Left cardiac atrium (tissue), 4 donors: ENCODE measurements at regions of chr11 and their contacts with region 1.

Region 1: GRCh38 chr11:110362971-110363509 is 66.6 kb upstream of the RDX start:
- DNase-seq: no peak
- ATAC-seq: peak; percentile 38 to 44

Region 2: GRCh38 chr11:109956124-109956793 is 406.8 kb before region 1 on chr11:
- intact Hi-C with region 1: loop called in 1 of 2 experiments (anchors 10 kb)
- DNase-seq: no peak
- ATAC-seq: no peak

Region 3: DNA sequence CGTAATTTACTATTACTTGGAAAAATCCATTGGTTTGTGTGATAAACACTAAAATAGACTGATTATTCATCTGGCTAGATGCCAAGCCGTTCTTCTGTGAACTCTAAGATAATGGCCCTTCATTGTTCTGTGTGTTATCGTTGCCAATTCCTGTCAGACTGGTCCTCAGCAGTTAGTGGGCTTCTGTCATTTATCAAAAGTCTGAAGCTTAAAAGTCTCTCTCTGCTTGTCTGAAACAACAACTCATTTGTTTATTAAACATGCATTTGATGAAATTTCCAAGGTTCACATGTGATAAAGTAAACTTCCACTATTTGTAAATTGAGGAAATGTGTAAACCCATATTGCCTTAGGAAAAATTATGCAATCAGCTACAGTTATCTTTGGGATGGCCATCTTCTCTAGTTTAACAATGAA is 45.5 kb before region 1 on chr11:
- intact Hi-C with region 1: no loop called
- DNase-seq: no peak
- ATAC-seq: peak; percentile 34 to 65